Endothelial cell of umbilical vein (primary cell): ENCODE measurements at regions of chr12 and their contacts with region 1.

Region 1: DNA sequence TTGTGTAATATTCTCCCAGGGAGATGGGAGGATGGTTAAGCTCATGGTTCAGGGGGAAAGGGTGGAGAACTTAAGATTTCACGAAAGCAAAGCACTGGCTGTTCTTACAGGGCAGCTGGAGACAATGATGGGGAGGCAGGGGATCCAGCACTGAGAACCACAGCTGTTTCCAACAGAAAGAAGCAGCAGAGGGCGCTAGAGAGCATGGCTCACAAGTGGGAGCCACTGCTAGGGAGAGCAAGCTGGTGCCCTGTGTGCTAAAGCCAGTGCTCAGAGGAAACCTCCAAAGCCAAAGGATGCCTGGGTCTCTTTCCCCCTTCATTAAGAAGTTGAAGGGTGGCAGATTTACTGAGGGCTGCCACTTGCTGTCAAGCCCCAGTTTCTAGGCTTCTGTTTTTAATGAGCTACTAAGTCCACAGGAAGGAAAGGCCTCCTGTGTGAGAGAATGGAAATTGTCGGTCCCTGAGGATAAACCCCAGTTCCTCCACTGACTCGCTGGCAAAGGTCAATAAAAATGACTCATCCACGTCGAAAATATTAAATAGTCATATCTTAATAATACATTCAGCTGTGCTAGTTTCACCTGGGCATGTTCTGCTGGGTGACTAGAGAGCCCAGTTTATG is 199.7 kb downstream of the ANO2 start:
- DNase-seq: peak; percentile 93
- H3K4me3 ChIP-seq: no peak overlapping the region
- H3K27ac ChIP-seq: peak overlapping the region; percentile 39
- H3K4me1 ChIP-seq: peaks cover 16% of the 10 kb centered on the region
- H3K27me3 ChIP-seq: no peaks in the 10 kb centered on the region
- CTCF ChIP-seq: peak; percentile 93 to 95
- POLR2A ChIP-seq: no peak

Region 2: GRCh38 chr12:5716231-5716630 is 29.1 kb before region 1 on chr12:
- CTCF ChIA-PET with region 1: interaction called, 11 read pairs
- POLR2A ChIA-PET with region 1: no interaction called
- dilution Hi-C with region 1: no loop called
- intact Hi-C with region 1: no loop called
- DNase-seq: peak; percentile 69
- H3K4me3 ChIP-seq: no peak overlapping the region
- H3K27ac ChIP-seq: no peak overlapping the region
- H3K4me1 ChIP-seq: peaks cover 17% of the 10 kb centered on the region
- H3K27me3 ChIP-seq: no peaks in the 10 kb centered on the region
- CTCF ChIP-seq: no peak
- POLR2A ChIP-seq: no peak

Region 3: DNA sequence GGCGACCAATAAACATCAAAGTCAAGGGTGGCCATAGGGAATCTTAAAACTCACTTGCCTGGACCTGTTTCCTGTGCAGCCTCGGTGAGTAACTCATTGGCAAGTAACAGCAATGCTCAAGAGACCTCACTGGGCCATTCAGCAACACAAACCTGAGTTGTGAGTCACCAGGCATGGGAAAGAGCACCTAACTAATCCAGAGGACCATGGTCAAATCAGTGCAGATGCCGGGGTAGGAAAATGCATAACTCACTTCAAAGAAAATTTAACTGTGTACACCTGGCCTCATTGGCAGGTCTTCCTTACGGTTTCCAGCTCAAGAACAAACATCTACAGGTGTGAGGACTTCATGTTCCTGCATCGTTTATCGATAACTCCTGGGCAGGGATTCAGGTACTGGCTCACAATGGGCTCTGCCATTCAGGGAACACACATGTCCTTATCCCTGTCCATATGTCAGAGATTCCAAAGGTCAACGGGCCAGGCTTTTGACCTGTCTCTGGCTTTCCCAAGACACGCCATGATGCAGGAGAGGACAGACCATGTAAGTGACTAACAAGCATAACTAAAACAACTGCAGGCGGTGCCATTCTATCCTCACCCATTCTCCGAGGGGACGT is 12.1 kb before region 1 on chr12:
- CTCF ChIA-PET with region 1: interaction called, 57 read pairs
- POLR2A ChIA-PET with region 1: no interaction called
- dilution Hi-C with region 1: no loop called
- intact Hi-C with region 1: no loop called
- DNase-seq: no peak
- H3K4me3 ChIP-seq: no peak overlapping the region
- H3K27ac ChIP-seq: no peak overlapping the region
- H3K4me1 ChIP-seq: no peaks in the 10 kb centered on the region
- H3K27me3 ChIP-seq: no peaks in the 10 kb centered on the region
- CTCF ChIP-seq: no peak
- POLR2A ChIP-seq: no peak

Region 4: GRCh38 chr12:5796171-5796958 is 51.0 kb after region 1 on chr12:
- CTCF ChIA-PET with region 1: interaction called, 21 read pairs
- POLR2A ChIA-PET with region 1: no interaction called
- dilution Hi-C with region 1: no loop called
- intact Hi-C with region 1: no loop called
- DNase-seq: no peak
- H3K4me3 ChIP-seq: no peak overlapping the region
- H3K27ac ChIP-seq: no peak overlapping the region
- H3K4me1 ChIP-seq: no peaks in the 10 kb centered on the region
- H3K27me3 ChIP-seq: no peaks in the 10 kb centered on the region
- CTCF ChIP-seq: peak; percentile 26 to 44
- POLR2A ChIP-seq: no peak

Region 5: GRCh38 chr12:5898876-5899275 is 153.5 kb after region 1 on chr12:
- CTCF ChIA-PET with region 1: interaction called, 11 read pairs
- POLR2A ChIA-PET with region 1: no interaction called
- dilution Hi-C with region 1: no loop called
- intact Hi-C with region 1: no loop called
- DNase-seq: no peak
- H3K4me3 ChIP-seq: no peak overlapping the region
- H3K27ac ChIP-seq: no peak overlapping the region
- H3K4me1 ChIP-seq: peaks cover 5% of the 10 kb centered on the region
- H3K27me3 ChIP-seq: no peaks in the 10 kb centered on the region
- CTCF ChIP-seq: no peak
- POLR2A ChIP-seq: no peak

Region 6: DNA sequence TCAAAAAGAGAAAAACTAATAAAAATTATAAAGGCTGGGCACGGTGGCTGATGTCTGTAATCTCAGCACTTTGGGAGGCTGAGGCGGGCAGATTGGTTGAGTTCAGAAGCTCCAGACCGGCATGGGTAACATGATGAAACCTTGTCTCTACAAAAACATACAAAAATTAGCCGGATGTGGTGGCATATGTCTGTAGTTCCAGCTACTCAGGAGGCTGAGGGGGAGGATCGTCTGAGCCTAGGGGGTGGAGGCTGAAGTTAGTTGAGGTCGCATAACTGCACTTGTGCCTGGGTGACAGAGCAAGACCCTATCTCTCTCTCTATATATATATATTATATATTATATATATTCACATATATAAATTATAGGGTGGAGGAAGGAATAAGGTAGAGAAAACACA is 232.2 kb after region 1 on chr12:
- CTCF ChIA-PET with region 1: no interaction called
- POLR2A ChIA-PET with region 1: no interaction called
- dilution Hi-C with region 1: no loop called
- intact Hi-C with region 1: no loop called
- DNase-seq: no peak
- H3K4me3 ChIP-seq: no peak overlapping the region
- H3K27ac ChIP-seq: no peak overlapping the region
- H3K4me1 ChIP-seq: peaks cover 2% of the 10 kb centered on the region
- H3K27me3 ChIP-seq: no peaks in the 10 kb centered on the region
- CTCF ChIP-seq: no peak
- POLR2A ChIP-seq: no peak